HAP-1 (cell line): ENCODE measurements at regions of chr12 and their contacts with region 1.

Region 1: GRCh38 chr12:949453-950191 is at the start of gene RAD52:
- DNase-seq: peak; percentile 96 to 98
- H3K4me3 ChIP-seq: peak within 1 kb of the TSS; percentile 65
- H3K4me1 ChIP-seq: peaks cover 10% of the 10 kb centered on the region
- H3K27me3 ChIP-seq: no peaks in the 10 kb centered on the region

Region 2: GRCh38 chr12:575948-576612 is 373.5 kb before region 1 on chr12:
- in situ Hi-C with region 1: loop called (anchors 10 kb)
- DNase-seq: peak; percentile 70 to 89
- H3K4me3 ChIP-seq: no peak overlapping the region
- H3K4me1 ChIP-seq: peaks cover 34% of the 10 kb centered on the region
- H3K27me3 ChIP-seq: no peaks in the 10 kb centered on the region

Region 3: GRCh38 chr12:1474041-1474573 is 524.5 kb after region 1 on chr12:
- in situ Hi-C with region 1: no loop called
- DNase-seq: peak; percentile 22 to 69
- H3K4me3 ChIP-seq: no peak overlapping the region
- H3K4me1 ChIP-seq: peaks cover 17% of the 10 kb centered on the region
- H3K27me3 ChIP-seq: no peaks in the 10 kb centered on the region

Region 4: GRCh38 chr12:1594261-1595025 is 644.8 kb after region 1 on chr12 and contains the start of gene FBXL14:
- in situ Hi-C with region 1: loop called (anchors 25 kb)
- DNase-seq: peak; percentile 80 to 94
- H3K4me3 ChIP-seq: peak within 1 kb of the TSS; percentile 59
- H3K4me1 ChIP-seq: peaks cover 35% of the 10 kb centered on the region
- H3K27me3 ChIP-seq: no peaks in the 10 kb centered on the region

Region 5: DNA sequence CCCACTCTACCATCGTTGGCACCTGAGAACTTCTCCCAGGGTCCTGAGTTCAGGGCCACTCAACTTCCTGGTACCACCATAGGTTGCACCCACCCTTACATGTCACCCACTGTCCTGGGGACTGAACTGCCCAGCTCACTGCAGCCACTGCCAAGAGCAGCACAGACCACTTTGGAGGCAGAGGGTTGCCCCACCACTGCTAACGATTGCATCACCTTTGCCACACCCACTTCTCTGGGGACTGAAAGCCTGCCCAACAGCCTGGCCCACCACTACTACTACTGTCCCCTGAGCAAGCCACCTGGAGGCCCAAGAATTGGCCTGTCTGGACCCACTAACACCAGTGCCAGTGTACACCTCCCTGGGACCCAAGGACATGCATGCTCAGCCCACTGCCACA is 941.2 kb after region 1 on chr12:
- in situ Hi-C with region 1: no loop called
- DNase-seq: no peak
- H3K4me3 ChIP-seq: no peak overlapping the region
- H3K4me1 ChIP-seq: no peaks in the 10 kb centered on the region
- H3K27me3 ChIP-seq: no peaks in the 10 kb centered on the region